ENCODE measurements at regions of chr16 and their contacts with region 1.

Region 1: GRCh38 chr16:56317998-56318826 is 107.1 kb downstream of the AMFR start:
- DNase-seq: peak; percentile 89
- ATAC-seq: peak; percentile 99

Region 2: GRCh38 chr16:55944377-55944802 is 373.8 kb before region 1 on chr16:
- intact Hi-C with region 1: loop called (anchors 5 kb)
- DNase-seq: peak; percentile 75
- ATAC-seq: peak; percentile 97

Region 3: GRCh38 chr16:56041686-56042085 is 276.5 kb before region 1 on chr16:
- intact Hi-C with region 1: loop called (anchors 5 kb)
- DNase-seq: no peak
- ATAC-seq: peak; percentile 93

Region 4: GRCh38 chr16:56203052-56203451 is 115.2 kb before region 1 on chr16:
- intact Hi-C with region 1: loop called (anchors 10 kb)
- DNase-seq: peak; percentile 50
- ATAC-seq: peak; percentile 62